Colonic mucosa (tissue), 4 donors: ENCODE measurements at regions of chr7 and their contacts with region 1.

Region 1: GRCh38 chr7:56003749-56004148 is 39.4 kb downstream of the NIPSNAP2 start:
- DNase-seq: no peak
- H3K4me3 ChIP-seq: no peak overlapping the region
- H3K27ac ChIP-seq: no peak overlapping the region
- H3K4me1 ChIP-seq: no peaks in the 10 kb centered on the region
- H3K27me3 ChIP-seq: no peaks in the 10 kb centered on the region
- CTCF ChIP-seq: no peak

Region 2: DNA sequence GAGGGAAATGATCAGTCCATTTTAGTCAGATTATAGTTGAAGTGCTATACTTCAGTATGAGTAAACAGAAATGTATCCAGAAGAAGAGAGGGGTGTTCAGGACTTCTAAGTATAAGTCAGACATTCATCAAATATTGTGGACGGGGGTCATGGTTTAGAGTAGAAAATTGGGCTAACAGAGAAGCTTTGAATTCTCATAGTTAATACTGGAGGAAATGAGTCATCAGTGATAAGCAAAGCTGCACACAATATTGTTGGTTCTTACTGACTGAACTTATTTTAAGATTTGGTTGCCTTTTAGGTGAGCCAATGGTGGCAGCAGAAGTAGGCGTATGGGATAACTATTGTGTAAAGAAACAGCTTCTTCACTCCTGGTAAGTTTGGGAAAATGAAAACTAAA is 58.6 kb after region 1 on chr7:
- intact Hi-C with region 1: no loop called
- DNase-seq: no peak
- H3K4me3 ChIP-seq: no peak overlapping the region
- H3K27ac ChIP-seq: no peak overlapping the region
- H3K4me1 ChIP-seq: no peaks in the 10 kb centered on the region
- H3K27me3 ChIP-seq: no peaks in the 10 kb centered on the region
- CTCF ChIP-seq: no peak

Region 3: DNA sequence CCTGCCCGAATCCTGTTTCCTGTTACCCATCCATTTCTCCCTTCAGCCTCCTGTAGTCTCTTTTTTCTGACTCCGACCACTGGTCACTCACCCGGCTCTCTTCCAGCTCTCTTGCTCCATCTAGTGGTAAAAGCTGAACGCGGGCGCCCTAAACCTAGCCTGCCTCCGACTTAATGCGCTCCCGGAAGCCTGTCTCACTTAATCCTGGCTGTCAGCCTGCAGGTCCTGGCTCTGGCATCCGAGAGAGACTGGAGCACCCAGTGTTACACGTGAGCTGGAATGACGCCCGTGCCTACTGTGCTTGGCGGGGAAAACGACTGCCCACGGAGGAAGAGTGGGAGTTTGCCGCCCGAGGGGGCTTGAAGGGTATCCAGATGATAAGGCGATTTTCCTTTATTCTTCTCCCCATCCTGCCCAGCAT is 70.6 kb after region 1 on chr7:
- intact Hi-C with region 1: loop called (anchors 2 kb)
- DNase-seq: peak; percentile 87
- H3K4me3 ChIP-seq: no peak overlapping the region
- H3K27ac ChIP-seq: no peak overlapping the region
- H3K4me1 ChIP-seq: no peaks in the 10 kb centered on the region
- H3K27me3 ChIP-seq: no peaks in the 10 kb centered on the region
- CTCF ChIP-seq: peak; percentile 92